Activated CD4-positive, alpha-beta T cell treated with anti-CD3 and anti-CD28 coated beads for 36 hours (primary cell): ENCODE measurements at regions of chr1 and their contacts with region 1.

Region 1: GRCh38 chr1:2412519-2413233 is at the start of gene PEX10:
- DNase-seq: peak; percentile 100
- ATAC-seq: peak; percentile 89
- H3K4me3 Mint-ChIP-seq: peak within 1 kb of the TSS; percentile 83
- H3K27ac Mint-ChIP-seq: peak within 1 kb of the TSS; percentile 85
- H3K4me1 Mint-ChIP-seq: peaks cover 38% of the 10 kb centered on the region
- H3K27me3 Mint-ChIP-seq: no peaks in the 10 kb centered on the region
- total RNA-seq, gene PEX10: 15.1 to 17.7 TPM

Region 2: DNA sequence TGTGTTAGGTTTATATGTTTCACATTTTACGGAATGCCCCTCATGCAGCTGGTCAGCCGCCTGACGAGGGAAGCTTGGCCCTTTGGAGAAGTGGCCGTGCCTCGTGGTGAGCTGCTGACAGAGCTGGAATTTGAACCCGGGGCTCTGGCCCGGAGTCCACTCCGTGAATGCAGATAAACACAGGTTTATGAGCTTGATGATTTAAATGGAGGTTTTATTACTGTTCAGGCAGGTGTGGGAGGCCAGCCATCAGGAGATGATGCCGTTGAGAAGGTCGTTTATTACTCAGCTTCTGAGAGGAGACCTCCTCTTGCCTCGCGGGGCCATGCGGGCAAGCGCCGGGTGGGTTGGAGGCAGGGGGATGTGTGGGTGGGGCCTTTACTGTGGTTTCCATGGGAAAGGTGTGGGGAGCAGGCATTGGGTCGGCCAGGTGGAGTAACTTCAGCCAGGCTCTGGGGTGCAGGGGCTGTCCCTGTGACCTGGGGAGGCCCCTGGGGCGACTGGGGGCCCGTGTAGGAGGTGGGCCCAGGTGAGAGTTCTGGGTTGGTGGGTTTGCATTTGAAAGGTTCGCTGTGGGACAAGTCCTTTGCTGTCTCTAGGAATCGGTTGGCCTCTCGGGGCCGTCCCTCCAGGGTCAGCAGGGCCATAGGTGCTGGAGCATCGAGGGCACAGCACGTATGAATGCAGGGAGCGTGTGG is 340.4 kb before region 1 on chr1:
- CTCF ChIA-PET with region 1: no interaction called
- POLR2A ChIA-PET with region 1: no interaction called
- intact Hi-C with region 1: no loop called
- DNase-seq: peak; percentile 49
- ATAC-seq: peak; percentile 58
- H3K4me3 Mint-ChIP-seq: no peak overlapping the region
- H3K27ac Mint-ChIP-seq: no peak overlapping the region
- H3K4me1 Mint-ChIP-seq: peaks cover 10% of the 10 kb centered on the region
- H3K27me3 Mint-ChIP-seq: no peaks in the 10 kb centered on the region

Region 3: GRCh38 chr1:2205191-2205952 is 207.3 kb before region 1 on chr1:
- CTCF ChIA-PET with region 1: no interaction called
- POLR2A ChIA-PET with region 1: no interaction called
- intact Hi-C with region 1: loop called in 1 of 2 experiments (anchors 2 kb)
- DNase-seq: peak; percentile 98
- ATAC-seq: peak; percentile 88
- H3K4me3 Mint-ChIP-seq: peak overlapping the region; percentile 51
- H3K27ac Mint-ChIP-seq: no peak overlapping the region
- H3K4me1 Mint-ChIP-seq: peaks cover 3% of the 10 kb centered on the region
- H3K27me3 Mint-ChIP-seq: no peaks in the 10 kb centered on the region

Region 4: GRCh38 chr1:2399890-2400575 is 12.6 kb before region 1 on chr1:
- CTCF ChIA-PET with region 1: no interaction called
- POLR2A ChIA-PET with region 1: no interaction called
- intact Hi-C with region 1: no loop called
- DNase-seq: no peak
- ATAC-seq: no peak
- H3K4me3 Mint-ChIP-seq: no peak overlapping the region
- H3K27ac Mint-ChIP-seq: no peak overlapping the region
- H3K4me1 Mint-ChIP-seq: peaks cover 8% of the 10 kb centered on the region
- H3K27me3 Mint-ChIP-seq: no peaks in the 10 kb centered on the region

Region 5: GRCh38 chr1:2545759-2546514 is 133.3 kb after region 1 on chr1:
- CTCF ChIA-PET with region 1: interaction called, 9 read pairs
- POLR2A ChIA-PET with region 1: interaction called, 3 read pairs
- intact Hi-C with region 1: loop called (anchors 1 kb)
- DNase-seq: peak; percentile 94
- ATAC-seq: peak; percentile 34
- H3K4me3 Mint-ChIP-seq: peak overlapping the region; percentile 78
- H3K27ac Mint-ChIP-seq: no peak overlapping the region
- H3K4me1 Mint-ChIP-seq: peaks cover 16% of the 10 kb centered on the region
- H3K27me3 Mint-ChIP-seq: no peaks in the 10 kb centered on the region

Region 6: GRCh38 chr1:2786329-2787162 is 373.9 kb after region 1 on chr1:
- CTCF ChIA-PET with region 1: interaction called, 5 read pairs
- POLR2A ChIA-PET with region 1: no interaction called
- intact Hi-C with region 1: loop called (anchors 1 to 2 kb)
- DNase-seq: peak; percentile 85
- ATAC-seq: peak; percentile 74
- H3K4me3 Mint-ChIP-seq: no peak overlapping the region
- H3K27ac Mint-ChIP-seq: no peak overlapping the region
- H3K4me1 Mint-ChIP-seq: peaks cover 8% of the 10 kb centered on the region
- H3K27me3 Mint-ChIP-seq: peaks cover 29% of the 10 kb centered on the region

Region 7: GRCh38 chr1:2921970-2922686 is 509.5 kb after region 1 on chr1:
- CTCF ChIA-PET with region 1: interaction called, 4 read pairs
- POLR2A ChIA-PET with region 1: no interaction called
- intact Hi-C with region 1: loop called in 1 of 2 experiments (anchors 1 kb)
- DNase-seq: peak; percentile 65
- ATAC-seq: peak; percentile 55
- H3K4me3 Mint-ChIP-seq: no peak overlapping the region
- H3K27ac Mint-ChIP-seq: no peak overlapping the region
- H3K4me1 Mint-ChIP-seq: no peaks in the 10 kb centered on the region
- H3K27me3 Mint-ChIP-seq: peaks cover 2% of the 10 kb centered on the region